Left ventricle myocardium superior (tissue), 1 donor: ENCODE measurements at regions of chr3 and their contacts with region 1.

Region 1: GRCh38 chr3:25594007-25594502 is 70.7 kb downstream of the TOP2B start:
- DNase-seq: no peak
- ATAC-seq: peak; percentile 54

Region 2: DNA sequence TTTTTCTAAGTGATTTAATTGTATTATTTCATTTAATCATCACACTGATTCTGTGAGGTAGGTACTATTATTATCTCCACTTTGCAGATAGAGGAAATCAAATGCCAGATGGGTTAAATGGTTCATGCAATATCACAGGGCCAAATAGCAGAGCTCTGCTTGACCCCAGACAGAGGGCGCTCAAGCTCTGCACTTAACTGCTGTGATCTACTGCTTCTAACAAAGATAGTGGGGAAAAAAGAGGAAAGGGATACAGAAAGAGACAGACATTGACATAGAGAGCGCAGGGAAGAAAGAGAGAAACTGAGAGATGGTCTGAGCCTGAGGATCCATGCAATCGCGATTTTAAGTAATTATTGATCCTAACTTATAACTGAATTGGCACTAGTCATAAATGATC is 820.3 kb before region 1 on chr3:
- intact Hi-C with region 1: loop called (anchors 10 kb)
- DNase-seq: peak; percentile 31
- ATAC-seq: peak; percentile 76

Region 3: GRCh38 chr3:24963762-24964625 is 630.1 kb before region 1 on chr3:
- intact Hi-C with region 1: loop called (anchors 10 kb)
- DNase-seq: no peak
- ATAC-seq: no peak

Region 4: GRCh38 chr3:25021816-25022215 is 572.2 kb before region 1 on chr3:
- intact Hi-C with region 1: loop called (anchors 10 kb)
- DNase-seq: no peak
- ATAC-seq: peak; percentile 51

Region 5: GRCh38 chr3:25433868-25434267 is 160.2 kb before region 1 on chr3:
- intact Hi-C with region 1: loop called (anchors 5 kb)
- DNase-seq: no peak
- ATAC-seq: peak; percentile 34